GM12878 (cell line): ENCODE measurements at regions of chr6 and their contacts with region 1.

Region 1: DNA sequence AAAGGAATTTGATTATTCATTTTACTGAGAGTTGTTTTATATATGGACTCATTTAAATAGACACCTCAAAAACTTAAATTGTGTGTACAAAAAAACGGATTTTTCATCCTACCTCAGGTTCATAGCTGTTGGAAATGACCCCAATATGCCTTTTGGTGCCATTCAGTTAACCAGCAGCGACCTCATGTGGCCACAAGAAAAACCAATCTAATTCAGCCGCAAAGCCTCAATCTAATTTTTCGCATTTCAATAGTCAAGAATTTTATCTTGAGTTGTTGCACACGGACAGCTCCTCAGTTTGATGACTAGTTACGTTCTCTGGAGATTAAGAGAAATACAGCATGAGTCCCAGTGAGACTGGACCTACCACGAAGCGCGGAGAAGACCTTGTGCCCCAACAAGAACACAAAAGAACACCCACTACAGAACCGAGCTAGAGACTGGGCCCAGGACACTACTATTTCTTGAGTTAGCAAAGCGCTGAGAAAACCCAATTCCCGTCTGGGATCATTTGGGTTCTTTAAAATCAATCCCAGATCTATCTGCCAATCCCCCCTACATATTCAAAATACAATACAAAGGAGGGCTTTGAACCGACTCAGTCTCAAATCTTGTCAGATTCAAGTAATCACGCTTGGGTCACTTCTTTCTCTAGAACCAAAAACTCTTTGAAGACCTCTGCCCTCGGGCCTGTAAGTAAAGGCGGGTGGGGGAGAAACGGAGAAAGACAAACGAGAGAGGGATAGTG is 1.1 kb downstream of the TCP11 start:
- DNase-seq: peak; percentile 32
- ATAC-seq: peak; percentile 74
- H3K4me3 ChIP-seq: no peak overlapping the region
- H3K27ac ChIP-seq: no peak overlapping the region
- H3K4me1 ChIP-seq: peaks cover 3% of the 10 kb centered on the region; the same call in 1 of the 2 replicates
- H3K27me3 ChIP-seq: no peaks in the 10 kb centered on the region
- CTCF ChIP-seq: peak; percentile 68 to 89 (median 77)
- EP300 ChIP-seq: no peak
- POLR2A ChIP-seq: no peak
- RAD21 ChIP-seq: peak; percentile 95

Region 2: DNA sequence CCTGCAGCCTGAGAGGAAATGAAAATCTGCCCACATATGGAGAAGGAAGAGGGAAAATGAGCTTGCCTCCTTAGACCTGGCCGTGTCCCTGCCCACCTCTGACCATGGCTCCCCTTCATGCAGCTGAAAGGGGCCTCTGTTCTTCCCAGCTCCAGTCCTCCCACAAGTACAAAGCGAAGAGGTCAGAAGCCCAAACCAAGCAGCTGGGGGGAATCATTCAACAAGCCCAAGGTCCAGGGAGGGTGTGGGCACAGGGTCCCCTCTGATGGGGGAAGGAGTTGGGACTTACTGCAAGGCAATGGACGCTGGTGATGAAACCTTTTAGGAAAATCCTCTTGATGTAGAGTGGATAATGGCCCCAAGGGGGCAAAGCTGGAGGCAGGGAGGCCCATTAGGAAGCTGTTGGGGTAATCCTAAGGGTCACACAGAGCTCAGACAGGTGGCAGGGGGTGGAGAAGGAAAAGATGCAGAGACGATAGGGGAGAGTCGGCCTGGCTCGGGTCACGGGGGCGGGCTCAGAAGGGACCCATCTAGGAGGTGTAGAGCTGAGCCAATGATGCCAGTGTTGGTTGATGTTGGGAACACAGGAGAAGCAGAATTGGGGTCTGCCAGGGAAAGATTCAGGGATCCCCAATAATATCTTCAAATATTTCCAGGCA is 978.1 kb before region 1 on chr6:
- CTCF ChIA-PET with region 1: interaction called, 6 read pairs
- POLR2A ChIA-PET with region 1: no interaction called
- RAD21 ChIA-PET with region 1: no interaction called
- SMC1A ChIA-PET with region 1: no interaction called
- in situ Hi-C with region 1: no loop called
- intact Hi-C with region 1: loop called (anchors 10 kb)
- DNase-seq: no peak
- ATAC-seq: no peak
- H3K4me3 ChIP-seq: no peak overlapping the region
- H3K27ac ChIP-seq: no peak overlapping the region
- H3K4me1 ChIP-seq: no peaks in the 10 kb centered on the region
- H3K27me3 ChIP-seq: no peaks in the 10 kb centered on the region; a peak in 1 of 4 replicates
- CTCF ChIP-seq: no peak
- EP300 ChIP-seq: no peak
- POLR2A ChIP-seq: no peak
- RAD21 ChIP-seq: no peak

Region 3: DNA sequence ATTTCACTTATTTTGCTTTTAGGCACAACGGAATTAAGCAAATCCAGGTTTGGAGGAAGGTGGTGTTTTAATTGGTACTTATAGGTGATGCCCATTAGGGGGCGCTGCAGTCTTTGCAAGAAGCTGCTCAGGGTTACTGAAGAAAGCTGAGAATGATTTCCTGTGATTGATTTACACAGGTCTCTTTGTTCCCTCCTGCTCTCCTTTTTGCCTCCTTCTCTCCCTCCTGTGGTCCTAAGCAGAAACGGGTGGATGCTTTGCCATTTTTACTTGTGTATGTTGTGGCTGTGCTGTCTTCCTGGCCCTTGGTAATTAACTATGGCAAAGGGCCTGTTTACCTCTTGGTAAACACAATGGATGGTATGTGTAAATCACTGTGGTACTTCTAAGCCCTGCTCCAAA is 153.2 kb before region 1 on chr6:
- CTCF ChIA-PET with region 1: interaction called, 145 read pairs
- POLR2A ChIA-PET with region 1: interaction called, 4 read pairs
- RAD21 ChIA-PET with region 1: interaction called, 18 read pairs
- SMC1A ChIA-PET with region 1: interaction called, 88 read pairs
- in situ Hi-C with region 1: loop called (anchors 5 kb)
- intact Hi-C with region 1: loop called (anchors 1 kb)
- DNase-seq: no peak
- ATAC-seq: peak; percentile 79
- H3K4me3 ChIP-seq: no peak overlapping the region
- H3K27ac ChIP-seq: no peak overlapping the region
- H3K4me1 ChIP-seq: peaks cover 3% of the 10 kb centered on the region
- H3K27me3 ChIP-seq: no peaks in the 10 kb centered on the region
- CTCF ChIP-seq: peak; percentile 70 to 83 (median 79)
- EP300 ChIP-seq: no peak
- POLR2A ChIP-seq: no peak
- RAD21 ChIP-seq: peak; percentile 94

Region 4: DNA sequence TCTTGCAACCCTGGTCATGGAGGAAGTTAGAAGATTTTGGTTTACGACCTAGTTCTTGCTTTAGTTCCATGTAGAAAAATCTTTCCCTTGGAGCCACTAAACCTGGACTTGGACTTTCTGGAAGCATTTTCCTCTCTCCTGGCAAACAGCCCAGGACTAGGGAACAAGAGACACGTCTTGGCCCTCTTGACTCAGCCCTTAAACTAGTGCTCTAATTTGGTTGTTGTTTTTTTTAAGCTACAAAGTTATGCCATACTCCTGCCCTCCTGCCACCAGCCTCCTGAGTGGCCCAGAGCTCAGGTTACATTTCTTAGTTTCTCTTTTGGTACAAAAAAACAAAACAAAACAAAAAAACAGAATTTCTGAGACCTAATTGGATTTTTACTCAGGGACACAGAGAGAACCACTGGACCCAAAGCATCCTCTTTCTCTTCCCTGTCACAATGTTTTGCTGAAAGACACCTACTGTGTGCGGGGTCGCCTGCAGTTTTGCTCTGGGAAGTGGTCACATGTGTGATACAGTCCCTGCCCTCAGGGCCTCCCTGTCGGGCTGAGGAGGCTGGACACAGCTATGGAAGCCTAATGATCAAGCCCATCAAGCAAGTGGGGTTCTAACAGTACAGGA is 41.3 kb after region 1 on chr6:
- CTCF ChIA-PET with region 1: interaction called, 12 read pairs
- POLR2A ChIA-PET with region 1: no interaction called
- RAD21 ChIA-PET with region 1: interaction called, 3 read pairs
- SMC1A ChIA-PET with region 1: interaction called, 3 read pairs
- in situ Hi-C with region 1: no loop called
- intact Hi-C with region 1: no loop called
- DNase-seq: no peak
- ATAC-seq: no peak
- H3K4me3 ChIP-seq: no peak overlapping the region
- H3K27ac ChIP-seq: no peak overlapping the region
- H3K4me1 ChIP-seq: peaks cover 14% of the 10 kb centered on the region
- H3K27me3 ChIP-seq: no peaks in the 10 kb centered on the region
- CTCF ChIP-seq: no peak
- EP300 ChIP-seq: no peak
- POLR2A ChIP-seq: no peak
- RAD21 ChIP-seq: no peak

Region 5: GRCh38 chr6:35209081-35209480 is 69.0 kb after region 1 on chr6:
- CTCF ChIA-PET with region 1: interaction called, 114 read pairs
- POLR2A ChIA-PET with region 1: no interaction called
- RAD21 ChIA-PET with region 1: interaction called, 3 read pairs
- SMC1A ChIA-PET with region 1: interaction called, 65 read pairs
- in situ Hi-C with region 1: no loop called
- intact Hi-C with region 1: no loop called
- DNase-seq: no peak
- ATAC-seq: no peak
- H3K4me3 ChIP-seq: no peak overlapping the region
- H3K27ac ChIP-seq: no peak overlapping the region
- H3K4me1 ChIP-seq: no peaks in the 10 kb centered on the region
- H3K27me3 ChIP-seq: peaks cover 2 to 9% of the 10 kb centered on the region in 2 experiments
- CTCF ChIP-seq: no peak
- EP300 ChIP-seq: no peak
- POLR2A ChIP-seq: no peak
- RAD21 ChIP-seq: no peak